PC-9 (cell line): ENCODE measurements at regions of chr6 and their contacts with region 1.

Region 1: DNA sequence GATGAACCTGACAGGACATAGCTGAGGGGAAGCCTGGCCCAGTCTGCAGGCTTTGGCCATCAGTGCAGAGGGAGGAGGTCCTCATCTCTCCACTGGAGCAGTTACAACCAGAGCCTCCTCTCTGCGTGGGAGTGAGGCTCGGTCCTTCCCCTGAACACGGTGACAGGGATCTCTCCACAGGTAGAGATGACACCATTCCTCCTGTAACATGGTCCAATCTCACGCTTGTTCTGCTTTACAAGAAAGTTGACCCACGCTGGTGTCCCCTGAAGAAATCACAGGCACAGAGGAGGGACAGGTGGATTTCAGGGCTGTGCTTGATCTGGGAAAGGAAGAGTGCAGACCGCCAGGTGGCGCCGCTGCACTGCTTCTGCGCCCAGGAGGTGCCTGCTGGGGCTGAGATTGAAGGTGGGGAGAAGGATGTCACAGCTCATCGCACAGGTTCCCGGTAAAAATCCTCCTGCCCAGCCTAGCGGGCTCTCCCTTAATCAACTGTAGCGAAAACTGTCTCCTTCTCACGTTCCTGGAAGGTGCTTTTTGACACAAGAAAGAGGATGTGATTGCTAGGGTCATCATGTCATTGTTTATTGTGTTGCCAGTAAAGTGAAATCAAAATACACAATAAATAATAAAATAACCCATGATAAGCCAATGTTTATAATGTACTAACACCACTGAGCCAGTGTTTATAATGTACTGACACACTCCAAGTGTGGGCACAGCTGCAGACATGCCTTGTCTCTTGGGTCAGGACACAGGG is 20.4 kb downstream of the HLA-G start:
- DNase-seq: peak; percentile 43 to 79
- H3K4me3 ChIP-seq: no peak overlapping the region
- H3K27ac ChIP-seq: no peak overlapping the region
- H3K4me1 ChIP-seq: no peaks in the 10 kb centered on the region
- H3K27me3 ChIP-seq: no peaks in the 10 kb centered on the region
- CTCF ChIP-seq: peak; percentile 95

Region 2: GRCh38 chr6:28824793-28825731 is 1023.0 kb before region 1 on chr6:
- CTCF ChIA-PET with region 1: no interaction called
- POLR2A ChIA-PET with region 1: no interaction called
- intact Hi-C with region 1: no loop called
- DNase-seq: no peak
- H3K4me3 ChIP-seq: no peak overlapping the region
- H3K27ac ChIP-seq: no peak overlapping the region
- H3K4me1 ChIP-seq: no peaks in the 10 kb centered on the region
- H3K27me3 ChIP-seq: peaks cover 24% of the 10 kb centered on the region
- CTCF ChIP-seq: no peak

Region 3: DNA sequence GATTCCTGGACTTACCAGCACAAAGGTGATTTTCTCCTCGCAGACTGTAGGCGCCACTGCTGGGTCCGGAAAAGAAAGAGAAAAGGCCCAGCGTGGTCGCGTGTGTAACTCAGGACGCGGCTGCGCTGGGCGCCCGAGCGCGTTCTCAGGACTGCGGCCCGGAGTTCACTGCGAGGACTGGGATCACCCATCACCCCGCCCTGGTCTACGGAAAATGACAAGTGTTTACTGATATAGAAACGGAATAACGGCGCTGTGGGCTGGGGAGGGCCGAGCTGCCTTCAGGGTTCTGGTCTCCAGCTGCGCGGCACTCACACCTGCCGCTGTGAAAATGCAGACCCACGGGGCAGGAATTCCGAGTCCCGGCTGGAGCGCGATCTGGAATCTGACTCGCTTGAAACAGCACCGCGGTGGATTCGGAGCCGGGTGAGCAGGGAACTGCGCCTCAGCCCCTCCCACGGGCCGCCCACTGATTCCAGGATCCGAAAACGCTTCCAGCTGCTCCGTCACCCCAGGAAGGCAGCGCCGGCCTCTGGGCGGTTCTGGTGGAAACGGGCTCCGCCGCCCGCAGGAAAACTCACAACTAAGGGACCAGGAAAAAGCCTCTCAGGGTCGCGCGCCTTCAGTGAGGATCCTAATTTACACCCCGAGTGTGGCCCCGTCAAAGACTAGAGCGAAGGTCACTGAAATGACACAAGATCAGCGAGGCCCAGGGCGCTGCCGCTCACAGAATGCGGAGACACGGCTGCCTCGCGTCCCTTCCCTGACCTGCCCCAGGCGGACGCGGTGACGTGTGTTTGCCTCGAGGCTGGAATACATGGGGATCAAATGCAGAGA is 128.8 kb after region 1 on chr6:
- CTCF ChIA-PET with region 1: interaction called, 13 read pairs
- POLR2A ChIA-PET with region 1: no interaction called
- intact Hi-C with region 1: no loop called
- DNase-seq: peak; percentile 59 to 70
- H3K4me3 ChIP-seq: peak overlapping the region; percentile 73; the same call in 1 of the 2 replicates
- H3K27ac ChIP-seq: peak overlapping the region; percentile 55
- H3K4me1 ChIP-seq: peaks cover 10% of the 10 kb centered on the region
- H3K27me3 ChIP-seq: no peaks in the 10 kb centered on the region
- CTCF ChIP-seq: no peak; the same call in 1 of the 2 replicates

Region 4: GRCh38 chr6:30169658-30170614 is 321.9 kb after region 1 on chr6:
- CTCF ChIA-PET with region 1: interaction called, 8 read pairs
- POLR2A ChIA-PET with region 1: no interaction called
- intact Hi-C with region 1: loop called (anchors 1 kb)
- DNase-seq: peak; percentile 11 to 51
- H3K4me3 ChIP-seq: no peak overlapping the region
- H3K27ac ChIP-seq: no peak overlapping the region
- H3K4me1 ChIP-seq: no peaks in the 10 kb centered on the region
- H3K27me3 ChIP-seq: peaks cover 28% of the 10 kb centered on the region
- CTCF ChIP-seq: peak; percentile 87